GM10248 (cell line): ENCODE measurements at regions of chr4 and their contacts with region 1.

Region 1: GRCh38 chr4:105140684-105141490 is 5.8 kb upstream of the TET2 start:
- DNase-seq: no peak
- CTCF ChIP-seq: peak; percentile 58

Region 2: DNA sequence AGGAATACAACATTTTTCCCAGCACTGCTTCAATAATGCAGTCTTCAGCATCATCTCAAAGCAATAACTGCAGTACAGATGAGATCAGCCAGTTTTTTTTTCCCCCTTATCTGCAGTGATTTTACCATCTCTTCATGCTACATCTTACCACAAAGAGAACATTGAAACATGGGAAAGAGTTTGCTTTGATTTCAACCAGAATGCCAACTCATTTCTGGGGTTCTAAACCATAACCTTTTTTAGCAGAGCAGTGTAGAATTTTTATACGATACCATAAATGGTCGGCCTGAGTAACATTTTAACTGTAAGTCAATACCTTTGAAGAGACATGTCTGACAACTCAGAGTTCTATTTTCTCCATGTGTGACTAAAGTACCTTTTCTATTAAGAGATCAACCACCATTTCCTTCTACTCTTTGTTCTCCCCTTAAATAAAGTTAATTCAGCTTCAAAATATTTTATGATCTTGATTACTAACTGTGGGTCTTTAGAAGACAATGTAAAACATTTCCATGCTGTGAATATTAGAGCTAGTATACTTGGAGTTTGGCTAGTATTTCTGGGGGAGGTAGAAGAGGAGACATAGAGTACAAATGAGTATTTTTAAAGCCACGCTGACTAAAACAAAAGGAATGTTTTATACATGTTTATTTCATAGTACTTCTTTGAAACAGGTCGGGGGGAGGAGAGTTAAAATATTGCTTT is 74.9 kb after region 1 on chr4:
- CTCF ChIA-PET with region 1: interaction called, 12 read pairs
- POLR2A ChIA-PET with region 1: no interaction called
- DNase-seq: peak; percentile 17
- CTCF ChIP-seq: no peak